ENCODE measurements at regions of chr3 and their contacts with region 1.

Region 1: GRCh38 chr3:58332575-58333188 is at the start of gene PXK:
- DNase-seq: peak; percentile 84
- H3K4me3 Mint-ChIP-seq: peak within 1 kb of the TSS; percentile 100
- H3K27ac Mint-ChIP-seq: peak within 1 kb of the TSS; percentile 95
- H3K4me1 Mint-ChIP-seq: peaks cover 39% of the 10 kb centered on the region
- H3K27me3 Mint-ChIP-seq: no peaks in the 10 kb centered on the region

Region 2: GRCh38 chr3:58073301-58074108 is 259.2 kb before region 1 on chr3:
- CTCF ChIA-PET with region 1: no interaction called
- DNase-seq: no peak
- H3K4me3 Mint-ChIP-seq: no peak overlapping the region
- H3K27ac Mint-ChIP-seq: no peak overlapping the region
- H3K4me1 Mint-ChIP-seq: peaks cover 22% of the 10 kb centered on the region
- H3K27me3 Mint-ChIP-seq: no peaks in the 10 kb centered on the region

Region 3: DNA sequence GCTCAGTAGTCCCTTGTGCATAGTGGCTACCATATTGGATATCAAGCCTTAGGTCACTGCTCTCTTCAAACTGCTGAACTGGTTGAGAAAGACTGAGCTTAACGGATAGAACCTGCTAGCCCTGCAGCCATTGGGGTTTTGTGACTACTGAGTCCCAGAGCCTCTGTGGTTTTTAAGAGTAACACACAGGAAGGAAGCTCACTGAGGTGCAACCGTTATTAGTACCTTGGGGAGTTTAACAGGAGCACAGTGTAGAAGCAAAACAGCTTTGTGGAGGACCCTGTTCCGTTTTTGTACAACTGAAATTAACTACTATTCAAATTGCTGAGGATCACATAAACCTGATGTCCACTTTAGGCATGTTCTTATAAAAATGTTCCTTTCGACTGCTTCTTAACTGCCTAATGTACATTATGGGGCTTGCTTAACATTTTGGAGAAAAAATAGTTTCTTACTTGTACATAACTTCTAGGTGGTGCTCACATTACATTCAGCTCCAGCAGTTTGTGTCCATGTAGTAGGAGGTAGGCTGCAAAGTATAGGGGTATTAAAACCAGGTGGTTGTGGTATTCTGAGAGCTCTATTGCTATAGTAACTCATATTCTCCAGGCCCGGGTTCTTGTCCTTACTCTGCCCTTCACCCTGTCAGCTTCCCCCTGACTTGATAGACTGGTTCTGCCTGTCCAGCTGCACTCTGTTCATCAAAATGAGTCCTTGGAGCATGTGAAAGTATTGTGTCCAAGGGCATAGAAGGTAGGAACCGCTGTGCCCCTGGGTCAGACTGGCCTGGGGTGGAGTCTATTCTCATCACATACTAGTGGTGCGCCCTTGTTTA is 17.3 kb after region 1 on chr3:
- CTCF ChIA-PET with region 1: interaction called, 45 read pairs
- DNase-seq: no peak
- H3K4me3 Mint-ChIP-seq: no peak overlapping the region
- H3K27ac Mint-ChIP-seq: peak overlapping the region; percentile 45
- H3K4me1 Mint-ChIP-seq: peaks cover 65% of the 10 kb centered on the region
- H3K27me3 Mint-ChIP-seq: no peaks in the 10 kb centered on the region

Region 4: DNA sequence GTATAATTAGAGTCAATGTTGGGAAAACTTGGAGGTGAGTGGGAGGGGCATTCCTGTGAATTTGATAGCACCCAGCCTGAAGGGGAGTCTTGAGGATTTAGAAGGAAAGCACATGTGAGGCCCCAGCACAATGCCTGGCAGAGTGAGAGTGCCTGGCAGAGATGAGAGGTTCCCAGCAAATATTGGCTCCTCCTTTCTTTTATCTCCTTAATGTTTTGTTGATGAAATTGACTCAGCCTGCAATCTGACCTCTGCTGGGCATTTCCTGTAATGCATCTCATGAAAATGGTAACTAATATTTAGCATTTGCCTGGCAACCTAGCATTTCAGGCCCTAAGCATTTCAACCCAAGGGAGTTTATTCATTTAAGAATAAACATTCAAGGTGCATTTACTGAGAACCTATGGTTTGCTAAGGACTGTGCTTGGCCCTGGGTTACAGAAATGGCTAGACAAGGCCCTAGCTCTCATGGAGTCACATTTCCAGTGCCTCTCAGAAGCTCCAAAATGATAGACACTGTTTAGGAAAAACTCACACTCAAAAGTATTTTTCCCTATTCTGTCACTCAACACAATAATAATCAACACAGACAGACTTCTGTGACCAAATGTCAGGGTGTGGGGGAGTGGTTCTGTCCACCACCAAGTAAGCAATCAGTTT is 82.0 kb after region 1 on chr3:
- CTCF ChIA-PET with region 1: interaction called, 19 read pairs
- DNase-seq: peak; percentile 64
- H3K4me3 Mint-ChIP-seq: no peak overlapping the region
- H3K27ac Mint-ChIP-seq: no peak overlapping the region
- H3K4me1 Mint-ChIP-seq: peaks cover 6% of the 10 kb centered on the region
- H3K27me3 Mint-ChIP-seq: no peaks in the 10 kb centered on the region

Measured in activated naive CD4-positive, alpha-beta T cell treated with anti-CD3 and anti-CD28 coated beads, Interleukin-2, amount 10 ng/mL, durations not matched to agents 7 days and 5 days (primary cell).